Activated CD4-positive, alpha-beta T cell treated with anti-CD3 and anti-CD28 coated beads for 36 hours (primary cell): ENCODE measurements at regions of chr14 and their contacts with region 1.

Region 1: GRCh38 chr14:75258615-75259466 is 19.8 kb upstream of the FOS start:
- DNase-seq: peak; percentile 99
- ATAC-seq: peak; percentile 98
- H3K4me3 Mint-ChIP-seq: peak overlapping the region; percentile 77
- H3K27ac Mint-ChIP-seq: peak overlapping the region; percentile 97
- H3K4me1 Mint-ChIP-seq: peaks cover 24% of the 10 kb centered on the region
- H3K27me3 Mint-ChIP-seq: no peaks in the 10 kb centered on the region

Region 2: DNA sequence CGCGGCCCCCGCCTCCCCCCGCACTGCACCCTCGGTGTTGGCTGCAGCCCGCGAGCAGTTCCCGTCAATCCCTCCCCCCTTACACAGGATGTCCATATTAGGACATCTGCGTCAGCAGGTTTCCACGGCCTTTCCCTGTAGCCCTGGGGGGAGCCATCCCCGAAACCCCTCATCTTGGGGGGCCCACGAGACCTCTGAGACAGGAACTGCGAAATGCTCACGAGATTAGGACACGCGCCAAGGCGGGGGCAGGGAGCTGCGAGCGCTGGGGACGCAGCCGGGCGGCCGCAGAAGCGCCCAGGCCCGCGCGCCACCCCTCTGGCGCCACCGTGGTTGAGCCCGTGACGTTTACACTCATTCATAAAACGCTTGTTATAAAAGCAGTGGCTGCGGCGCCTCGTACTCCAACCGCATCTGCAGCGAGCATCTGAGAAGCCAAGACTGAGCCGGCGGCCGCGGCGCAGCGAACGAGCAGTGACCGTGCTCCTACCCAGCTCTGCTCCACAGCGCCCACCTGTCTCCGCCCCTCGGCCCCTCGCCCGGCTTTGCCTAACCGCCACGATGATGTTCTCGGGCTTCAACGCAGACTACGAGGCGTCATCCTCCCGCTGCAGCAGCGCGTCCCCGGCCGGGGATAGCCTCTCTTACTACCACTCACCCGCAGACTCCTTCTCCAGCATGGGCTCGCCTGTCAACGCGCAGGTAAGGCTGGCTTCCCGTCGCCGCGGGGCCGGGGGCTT is 19.8 kb after region 1 on chr14 and contains the start of gene FOS:
- CTCF ChIA-PET with region 1: interaction called, 3 read pairs
- POLR2A ChIA-PET with region 1: interaction called, 8 read pairs
- intact Hi-C with region 1: loop called (anchors 1 kb)
- DNase-seq: peak; percentile 92
- ATAC-seq: peak; percentile 91
- H3K4me3 Mint-ChIP-seq: peak within 1 kb of the TSS; percentile 85
- H3K27ac Mint-ChIP-seq: peak within 1 kb of the TSS; percentile 95
- H3K4me1 Mint-ChIP-seq: peaks cover 44% of the 10 kb centered on the region
- H3K27me3 Mint-ChIP-seq: peaks cover 24% of the 10 kb centered on the region
- total RNA-seq, gene FOS: 16.0 to 21.1 TPM